Naive thymus-derived CD4-positive, alpha-beta T cell (primary cell): ENCODE measurements at regions of chr21 and their contacts with region 1.

Region 1: GRCh38 chr21:33380483-33380998 is 22.7 kb upstream of the IFNGR2 start:
- DNase-seq: peak; percentile 46 to 81 (median 63)
- ATAC-seq: peak; percentile 78
- H3K4me3 ChIP-seq: peak overlapping the region; percentile 0
- H3K4me3 Mint-ChIP-seq: peak overlapping the region; percentile 34 to 98 (median 66)
- H3K27ac ChIP-seq: peak overlapping the region; percentile 53
- H3K27ac Mint-ChIP-seq: peak overlapping the region; percentile 69 to 91 (median 87)
- H3K4me1 ChIP-seq: peaks cover 45 to 60% of the 10 kb centered on the region in 2 donors
- H3K4me1 Mint-ChIP-seq: peaks cover 48 to 70% (median 63%) of the 10 kb centered on the region in 7 donors
- H3K27me3 ChIP-seq: peaks cover 0 to 6% of the 10 kb centered on the region in 2 donors
- H3K27me3 Mint-ChIP-seq: peaks cover 0 to 40% (median 0%) of the 10 kb centered on the region in 5 donors

Region 2: GRCh38 chr21:33403779-33404585 is 23.4 kb after region 1 on chr21:
- CTCF ChIA-PET with region 1: no interaction called
- POLR2A ChIA-PET with region 1: interaction called, 16 read pairs
- intact Hi-C with region 1: loop called (anchors 1 to 2 kb)
- DNase-seq: peak in 7 of 9 donors; percentile 21 to 43 (median 29)
- ATAC-seq: peak; percentile 30
- H3K4me3 ChIP-seq: peak overlapping the region; percentile 77
- H3K4me3 Mint-ChIP-seq: peak overlapping the region; percentile 87 to 99 (median 97)
- H3K27ac ChIP-seq: peak overlapping the region; percentile 84
- H3K27ac Mint-ChIP-seq: peak overlapping the region; percentile 4 to 98 (median 94)
- H3K4me1 ChIP-seq: peaks cover 16 to 25% of the 10 kb centered on the region in 2 donors
- H3K4me1 Mint-ChIP-seq: peaks cover 25 to 60% (median 54%) of the 10 kb centered on the region in 7 donors
- H3K27me3 ChIP-seq: no peaks in the 10 kb centered on the region
- H3K27me3 Mint-ChIP-seq: peaks cover 0 to 63% (median 0%) of the 10 kb centered on the region in 5 donors

Region 3: GRCh38 chr21:33419538-33420123 is 39.1 kb after region 1 on chr21:
- CTCF ChIA-PET with region 1: no interaction called
- POLR2A ChIA-PET with region 1: no interaction called
- intact Hi-C with region 1: loop called in 1 of 2 experiments (anchors 5 kb)
- DNase-seq: no peak
- ATAC-seq: no peak
- H3K4me3 ChIP-seq: no peak overlapping the region
- H3K4me3 Mint-ChIP-seq: no peak overlapping the region
- H3K27ac ChIP-seq: no peak overlapping the region
- H3K27ac Mint-ChIP-seq: peak overlapping the region in 3 of 9 donors; percentile 28 to 64 (median 62)
- H3K4me1 ChIP-seq: peaks cover 0 to 2% of the 10 kb centered on the region in 2 donors
- H3K4me1 Mint-ChIP-seq: peaks cover 2 to 17% (median 13%) of the 10 kb centered on the region in 7 donors
- H3K27me3 ChIP-seq: no peaks in the 10 kb centered on the region
- H3K27me3 Mint-ChIP-seq: peaks cover 0 to 5% (median 0%) of the 10 kb centered on the region in 5 donors

Region 4: GRCh38 chr21:33434770-33435360 is 54.3 kb after region 1 on chr21:
- CTCF ChIA-PET with region 1: interaction called, 5 read pairs
- POLR2A ChIA-PET with region 1: no interaction called
- intact Hi-C with region 1: loop called in 1 of 2 experiments (anchors 2 kb)
- DNase-seq: peak in 1 of 9 donors; percentile 24
- ATAC-seq: peak; percentile 88
- H3K4me3 ChIP-seq: no peak overlapping the region
- H3K4me3 Mint-ChIP-seq: peak overlapping the region in 2 of 10 donors; percentile 59 to 62
- H3K27ac ChIP-seq: peak overlapping the region; percentile 17
- H3K27ac Mint-ChIP-seq: peak overlapping the region; percentile 28 to 85 (median 68)
- H3K4me1 ChIP-seq: no peaks in the 10 kb centered on the region
- H3K4me1 Mint-ChIP-seq: peaks cover 0 to 32% (median 10%) of the 10 kb centered on the region in 7 donors
- H3K27me3 ChIP-seq: no peaks in the 10 kb centered on the region
- H3K27me3 Mint-ChIP-seq: no peaks in the 10 kb centered on the region